ENCODE measurements at regions of chr7 and their contacts with region 1.

Region 1: DNA sequence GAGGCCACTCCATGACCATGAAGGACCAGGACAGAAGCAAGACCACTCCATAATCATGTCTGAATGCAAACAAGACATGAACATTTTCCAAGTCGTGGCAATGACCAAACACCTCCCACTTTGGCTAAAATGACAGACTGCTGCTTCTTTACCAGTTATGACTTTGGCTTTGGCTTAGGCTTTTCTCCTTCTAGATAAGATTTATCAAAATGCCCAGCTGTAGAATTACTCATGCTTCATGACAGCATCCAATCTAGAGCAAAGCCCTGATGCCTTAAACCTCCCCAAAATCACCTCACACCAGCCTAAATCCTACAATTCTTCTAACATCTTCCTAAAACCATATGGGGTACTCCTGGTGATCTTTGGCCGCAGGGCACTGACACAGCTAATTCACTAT is 102.1 kb downstream of the VPS41 start:
- DNase-seq: no peak
- H3K4me3 ChIP-seq: no peak overlapping the region
- H3K27ac ChIP-seq: no peak overlapping the region
- H3K4me1 ChIP-seq: no peaks in the 10 kb centered on the region
- H3K27me3 ChIP-seq: no peaks in the 10 kb centered on the region
- CTCF ChIP-seq: no peak
- EP300 ChIP-seq: no peak
- RAD21 ChIP-seq: no peak

Region 2: GRCh38 chr7:38796626-38797501 is 10.0 kb before region 1 on chr7:
- CTCF ChIA-PET with region 1: interaction called, 17 read pairs
- POLR2A ChIA-PET with region 1: no interaction called
- DNase-seq: peak; percentile 41
- H3K4me3 ChIP-seq: no peak overlapping the region
- H3K27ac ChIP-seq: no peak overlapping the region
- H3K4me1 ChIP-seq: no peaks in the 10 kb centered on the region; a peak in 1 of 4 replicates
- H3K27me3 ChIP-seq: no peaks in the 10 kb centered on the region
- CTCF ChIP-seq: peak; percentile 99
- EP300 ChIP-seq: no peak
- RAD21 ChIP-seq: peak; percentile 95